Mammary epithelial cell (primary cell): ENCODE measurements at regions of chr5 and their contacts with region 1.

Region 1: DNA sequence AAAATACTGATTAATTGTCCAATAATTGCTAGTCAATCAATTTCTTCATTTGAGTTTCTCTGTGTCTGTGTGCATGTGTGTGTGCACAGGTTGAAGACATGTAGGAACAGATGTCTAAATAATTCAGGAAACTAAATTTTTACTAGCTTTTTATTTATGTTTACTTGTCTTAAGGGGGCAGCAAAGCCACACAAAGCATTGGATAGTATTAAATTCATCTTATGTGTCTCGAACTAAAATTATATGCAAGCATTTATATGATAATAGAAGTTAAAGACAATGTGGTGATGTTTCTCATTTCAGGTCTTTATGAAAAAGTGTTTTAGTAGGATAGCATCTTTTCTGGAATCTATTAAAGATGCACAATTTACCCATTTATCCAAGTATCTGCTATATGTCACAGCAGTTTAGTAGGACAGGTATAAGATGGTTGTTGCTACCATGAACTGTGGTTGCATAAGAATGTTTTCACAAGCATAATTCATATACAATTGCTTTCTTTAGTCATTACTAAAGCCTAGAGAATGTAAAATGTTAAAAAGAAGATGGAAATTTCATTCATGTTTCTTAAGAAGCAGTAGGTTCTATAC is 784.6 kb upstream of the NUDT12 start:
- DNase-seq: no peak
- H3K4me3 ChIP-seq: no peak overlapping the region
- H3K27ac ChIP-seq: no peak overlapping the region
- H3K4me1 ChIP-seq: peaks cover 8% of the 10 kb centered on the region
- H3K27me3 ChIP-seq: no peaks in the 10 kb centered on the region
- CTCF ChIP-seq: peak; percentile 16 to 26

Region 2: DNA sequence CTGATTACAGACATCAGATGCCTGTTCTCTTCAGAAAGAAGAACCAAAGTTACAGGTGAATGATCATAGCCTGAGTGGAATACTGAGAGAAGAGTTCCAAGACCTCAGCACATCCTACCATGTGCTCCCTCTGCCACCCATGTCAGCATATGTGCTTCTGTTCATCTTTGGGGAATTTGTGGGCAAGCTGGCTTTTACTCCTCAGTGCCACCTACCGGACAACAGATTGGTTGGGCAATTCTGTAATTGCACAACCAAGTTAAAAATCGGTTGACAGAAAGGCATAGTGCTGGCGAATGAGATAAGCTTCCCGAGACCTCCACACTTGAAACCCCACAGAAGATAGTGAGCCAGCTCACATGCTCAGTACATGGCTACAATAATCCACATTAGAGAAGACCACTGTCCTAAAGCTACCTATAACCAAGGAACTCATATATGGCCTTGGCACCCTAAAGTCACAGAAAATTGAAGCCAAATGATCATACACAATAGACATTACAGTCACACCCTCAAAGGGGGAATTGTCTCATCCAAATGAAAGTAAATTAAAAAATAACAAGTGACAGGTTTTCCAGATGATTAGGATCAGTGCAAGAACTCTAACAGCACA is 453.3 kb after region 1 on chr5:
- CTCF ChIA-PET with region 1: no interaction called
- dilution Hi-C with region 1: no loop called
- in situ Hi-C with region 1: no loop called
- intact Hi-C with region 1: loop called (anchors 5 kb)
- DNase-seq: peak; percentile 5
- H3K4me3 ChIP-seq: no peak overlapping the region
- H3K27ac ChIP-seq: no peak overlapping the region
- H3K4me1 ChIP-seq: no peaks in the 10 kb centered on the region
- H3K27me3 ChIP-seq: no peaks in the 10 kb centered on the region
- CTCF ChIP-seq: peak; percentile 32 to 55

Region 3: GRCh38 chr5:106121972-106122605 is 1774.9 kb after region 1 on chr5:
- CTCF ChIA-PET with region 1: interaction called, 3 read pairs
- dilution Hi-C with region 1: no loop called
- in situ Hi-C with region 1: no loop called
- intact Hi-C with region 1: loop called (anchors 5 kb)
- DNase-seq: peak; percentile 12
- H3K4me3 ChIP-seq: no peak overlapping the region
- H3K27ac ChIP-seq: no peak overlapping the region
- H3K4me1 ChIP-seq: no peaks in the 10 kb centered on the region
- H3K27me3 ChIP-seq: no peaks in the 10 kb centered on the region
- CTCF ChIP-seq: peak; percentile 89 to 95